Head of caudate nucleus (tissue), 42 donors: ENCODE measurements at regions of chr19 and their contacts with region 1.

Region 1: DNA sequence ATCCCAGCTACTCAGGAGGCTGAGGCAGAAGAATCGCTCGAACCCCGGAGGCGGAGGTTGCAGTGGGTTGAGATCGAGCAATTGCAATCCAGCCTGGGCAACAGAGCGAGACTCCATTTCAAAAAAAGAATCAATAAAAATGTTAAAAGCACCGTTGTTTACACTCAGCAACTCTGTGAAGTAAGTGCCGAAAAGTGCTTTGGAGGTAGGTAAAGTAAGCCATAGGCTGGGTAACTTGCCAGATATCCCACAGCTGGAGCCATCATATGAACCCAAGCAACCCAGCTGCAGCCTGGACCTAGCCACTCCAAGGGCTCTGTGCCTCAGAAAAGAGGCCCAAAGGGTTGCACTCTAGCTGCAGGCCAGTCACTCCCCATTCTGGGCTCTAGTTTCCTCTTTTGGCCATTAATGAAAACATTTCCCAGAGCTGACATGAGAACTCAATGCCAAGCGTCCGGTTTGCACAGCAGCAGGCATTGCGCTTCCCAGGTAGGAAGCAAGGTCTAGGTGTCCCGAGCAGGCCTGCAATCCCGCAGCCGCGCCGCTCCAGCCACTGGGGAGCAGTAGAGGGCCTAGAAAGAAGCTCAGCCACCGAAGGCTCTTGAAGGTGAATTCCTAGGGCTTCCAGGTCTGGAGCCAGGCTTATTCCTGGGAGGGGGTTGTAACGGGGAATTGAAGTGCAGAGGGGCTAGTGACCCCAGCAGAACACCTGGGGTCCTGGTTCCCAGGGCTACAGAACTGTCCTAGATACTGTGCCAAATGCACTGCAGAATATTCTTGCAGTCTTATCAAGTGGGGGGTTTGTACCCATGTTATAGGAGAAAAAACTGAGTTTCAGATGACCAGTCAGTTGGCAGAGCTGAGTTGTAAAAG is 4.1 kb upstream of the CD79A start:
- DNase-seq: peak; percentile 41 to 83 (median 70)

Region 2: GRCh38 chr19:41934849-41935374 is 61.9 kb after region 1 on chr19:
- intact Hi-C with region 1: loop called (anchors 10 kb)
- DNase-seq: peak; percentile 25 to 88 (median 64)